ENCODE measurements at regions of chr7 and their contacts with region 1.

Region 1: DNA sequence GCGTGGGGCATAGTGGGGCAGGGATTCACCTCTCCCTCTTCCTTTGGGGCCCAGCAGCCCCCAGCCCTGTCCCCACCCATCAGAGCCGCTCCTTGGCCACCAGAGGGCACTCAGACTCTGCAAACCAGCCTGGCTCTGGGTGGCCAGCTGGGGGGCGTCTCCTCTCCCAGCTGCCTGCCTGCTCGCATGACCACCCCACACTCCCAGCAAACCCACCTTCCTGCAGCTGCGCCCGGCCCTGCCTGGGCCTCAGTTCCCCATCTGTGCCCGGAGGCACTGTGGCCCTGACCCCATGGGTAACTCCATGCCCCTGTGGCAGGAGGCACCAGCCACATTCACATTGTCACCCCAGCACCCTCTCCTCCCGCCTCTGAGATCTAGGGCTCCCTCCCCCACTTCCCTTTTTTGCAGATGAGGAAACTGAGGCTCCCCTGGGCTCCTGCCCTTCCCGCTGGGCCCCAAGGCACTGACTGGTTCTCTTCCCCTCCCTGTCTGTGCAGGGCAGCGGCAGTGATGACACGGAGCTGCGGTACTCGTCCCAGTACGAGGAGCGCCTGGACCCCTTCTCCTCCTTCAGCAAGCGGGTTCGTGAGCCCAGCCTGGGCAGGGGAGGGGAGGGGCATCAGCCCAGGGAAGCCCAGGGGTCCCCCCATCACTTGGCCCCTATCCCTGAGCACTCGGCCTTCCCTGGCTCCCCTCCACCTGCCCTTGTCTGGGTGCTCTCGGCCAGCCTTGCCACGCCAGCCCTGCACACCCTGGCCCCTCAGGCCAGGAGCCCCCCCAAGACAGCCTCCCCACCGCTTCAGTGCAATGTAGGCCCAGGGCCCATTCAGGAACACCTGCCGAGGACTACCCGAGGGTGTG is 6.9 kb upstream of the SH2B2 start:
- ATAC-seq: peak; percentile 95 to 99 (median 96)
- H3K4me3 ChIP-seq: peak overlapping the region in 1 of 5 donors; percentile 10
- H3K27ac ChIP-seq: no peak overlapping the region
- H3K4me1 ChIP-seq: peaks cover 11 to 12% of the 10 kb centered on the region in 2 donors

Region 2: GRCh38 chr7:101542527-101543241 is 737.1 kb before region 1 on chr7:
- in situ Hi-C with region 1: loop called in 4 of 9 experiments (anchors 10 to 25 kb)
- ATAC-seq: peak; percentile 13 to 67 (median 54)
- H3K4me3 ChIP-seq: no peak overlapping the region
- H3K27ac ChIP-seq: no peak overlapping the region
- H3K4me1 ChIP-seq: peaks cover 0 to 6% of the 10 kb centered on the region in 2 donors

Region 3: DNA sequence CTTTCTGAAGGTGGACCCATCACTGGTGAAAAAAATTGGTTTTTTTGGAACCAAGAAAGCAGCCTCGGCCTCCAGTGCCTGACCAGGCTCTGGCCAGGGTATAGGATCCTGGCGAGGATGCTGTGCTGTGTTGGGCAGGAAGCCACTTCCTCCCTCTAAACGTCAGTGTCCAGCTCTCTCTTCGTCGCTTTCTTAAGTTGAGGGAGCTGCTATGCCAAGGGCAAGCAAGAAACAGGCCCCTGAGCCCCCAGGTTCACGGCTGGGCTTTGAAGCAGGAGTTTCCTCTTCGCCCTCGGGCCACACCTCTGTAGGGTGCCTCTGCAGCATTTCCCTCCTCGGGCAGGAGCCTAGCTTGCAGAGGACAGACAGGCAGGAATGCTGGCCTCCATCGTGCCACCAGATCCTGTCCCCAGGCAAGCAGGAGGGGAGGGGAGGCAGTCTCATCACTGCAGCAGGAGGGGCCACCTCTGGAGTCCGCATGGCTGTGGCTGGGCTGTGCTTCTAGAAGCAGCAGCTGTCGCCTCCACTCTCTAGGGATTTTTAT is 281.0 kb before region 1 on chr7:
- in situ Hi-C with region 1: no loop called
- ATAC-seq: peak in 5 of 8 experiments; percentile 59 to 75 (median 72)
- H3K4me3 ChIP-seq: no peak overlapping the region
- H3K27ac ChIP-seq: peak overlapping the region in 1 of 2 donors; percentile 67
- H3K4me1 ChIP-seq: peaks cover 16 to 22% of the 10 kb centered on the region in 2 donors

Region 4: DNA sequence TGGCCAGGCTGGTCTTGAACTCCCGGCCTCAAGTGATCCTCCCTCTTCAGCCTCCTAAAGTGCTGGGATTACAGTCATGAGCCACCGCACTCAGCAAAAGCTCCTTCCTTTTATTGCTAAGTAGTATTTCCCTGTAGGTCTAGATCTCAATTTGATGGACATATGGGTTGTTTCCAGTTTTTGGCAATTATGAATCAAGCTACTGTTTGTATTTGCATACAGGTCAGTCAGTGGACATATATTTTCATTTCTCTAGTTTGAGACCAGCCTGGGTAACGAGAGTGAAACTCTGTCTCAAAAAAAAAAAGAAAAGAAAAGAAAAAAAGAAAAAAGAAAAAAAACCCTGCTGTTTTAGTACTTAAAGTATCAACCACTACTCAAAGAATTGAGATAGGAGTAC is 110.0 kb after region 1 on chr7:
- in situ Hi-C with region 1: loop called in 5 of 9 experiments (anchors 10 to 25 kb)
- ATAC-seq: no peak
- H3K4me3 ChIP-seq: no peak overlapping the region
- H3K27ac ChIP-seq: no peak overlapping the region
- H3K4me1 ChIP-seq: no peaks in the 10 kb centered on the region

Region 5: DNA sequence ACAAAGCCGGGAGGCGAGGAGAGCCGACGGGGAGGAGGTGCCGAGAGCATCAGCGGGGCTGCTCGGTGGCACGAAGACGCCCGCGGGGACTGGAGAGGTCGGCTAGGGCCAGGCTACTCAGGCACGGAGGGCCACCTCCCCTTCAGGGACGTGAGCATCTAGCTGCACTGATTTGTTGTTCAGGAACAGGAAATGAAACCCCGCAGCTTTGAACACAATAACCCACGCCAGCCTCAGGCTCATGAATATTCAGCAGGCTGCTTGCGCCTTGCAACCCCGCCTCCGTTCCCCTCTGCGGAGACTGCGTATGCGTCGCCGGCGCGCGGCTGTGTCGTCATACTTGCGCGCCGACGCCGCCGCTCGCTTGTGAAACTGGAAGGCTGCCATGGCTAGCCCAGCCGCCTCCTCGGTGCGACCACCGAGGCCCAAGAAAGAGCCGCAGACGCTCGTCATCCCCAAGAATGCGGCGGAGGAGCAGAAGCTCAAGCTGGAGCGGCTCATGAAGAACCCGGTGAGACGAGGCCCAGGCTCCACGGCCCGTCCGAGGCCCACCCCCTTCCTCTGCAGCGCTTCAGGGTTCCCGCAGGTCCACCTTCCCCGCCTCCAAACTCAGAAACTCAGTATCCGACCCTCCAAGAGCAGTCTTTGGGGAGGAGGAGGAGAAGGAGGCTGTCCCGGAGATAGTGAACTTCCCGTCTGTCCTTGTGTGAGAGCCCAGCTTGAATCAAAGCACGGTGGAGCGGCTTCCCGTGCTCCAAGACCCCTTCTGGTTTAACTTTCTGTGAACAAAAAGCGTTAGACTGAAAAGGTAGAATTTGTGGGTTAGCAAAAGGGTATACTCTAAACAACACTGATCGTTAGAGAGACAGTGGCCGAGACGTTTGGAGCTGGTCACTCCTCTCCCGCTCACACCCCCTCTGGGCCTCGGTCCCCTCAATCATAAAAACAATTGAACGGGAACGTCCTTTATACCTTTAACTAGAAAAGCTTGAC is 116.6 kb after region 1 on chr7 and contains the start of gene PRKRIP1:
- in situ Hi-C with region 1: loop called in 4 of 9 experiments (anchors 10 to 25 kb)
- ATAC-seq: peak; percentile 93 to 99 (median 98)
- H3K4me3 ChIP-seq: peak within 1 kb of the TSS; percentile 64 to 100 (median 66)
- H3K27ac ChIP-seq: peak within 1 kb of the TSS; percentile 90 to 96
- H3K4me1 ChIP-seq: peaks cover 6 to 7% of the 10 kb centered on the region in 2 donors
- total RNA-seq, gene PRKRIP1: 15.2 to 39.6 (median 31.1) TPM

Measured in motor neuron (in vitro differentiated cells).